ENCODE measurements at regions of chr20 and their contacts with region 1.

Region 1: GRCh38 chr20:13029687-13030510 is 21.1 kb downstream of the SPTLC3 start:
- DNase-seq: peak; percentile 69
- H3K4me3 Mint-ChIP-seq: peak overlapping the region; percentile 28
- H3K27ac Mint-ChIP-seq: peak overlapping the region; percentile 89
- H3K4me1 Mint-ChIP-seq: peaks cover 28% of the 10 kb centered on the region
- H3K27me3 Mint-ChIP-seq: no peaks in the 10 kb centered on the region
- CTCF ChIP-seq: no peak

Region 2: DNA sequence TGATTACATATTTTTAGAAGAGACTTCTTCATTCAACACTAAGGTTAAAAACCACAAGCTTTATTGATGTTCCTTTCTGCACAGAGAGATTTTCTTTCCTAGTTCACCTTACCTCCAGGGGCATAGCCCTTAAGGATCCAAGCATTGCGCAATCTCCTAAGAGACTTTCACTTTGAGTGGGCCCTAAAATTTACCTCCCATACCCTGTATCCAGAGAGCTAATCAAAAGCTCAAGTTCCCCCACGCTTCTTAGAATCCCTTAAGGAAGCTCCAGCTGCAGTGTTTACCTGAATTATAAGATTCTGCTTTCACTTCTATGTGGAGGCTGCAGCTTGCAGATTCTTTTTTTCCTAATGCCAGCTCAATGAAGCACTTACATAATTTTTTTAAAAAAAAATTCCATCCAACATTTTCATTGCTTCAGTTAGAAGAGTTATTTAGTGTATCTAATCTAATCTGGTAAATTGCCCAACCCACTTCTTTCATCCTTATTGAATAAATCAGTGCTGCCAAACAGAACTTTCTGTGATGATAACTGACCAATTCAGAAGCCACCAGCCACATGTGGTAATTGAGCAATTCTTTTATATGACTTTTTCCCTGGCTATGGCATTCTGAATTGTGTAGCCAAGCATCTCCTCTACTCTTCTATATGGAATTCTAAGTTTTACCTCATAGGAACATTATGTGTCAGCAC is 45.7 kb before region 1 on chr20:
- CTCF ChIA-PET with region 1: no interaction called
- intact Hi-C with region 1: loop called (anchors 10 kb)
- DNase-seq: no peak
- H3K4me3 Mint-ChIP-seq: no peak overlapping the region
- H3K27ac Mint-ChIP-seq: no peak overlapping the region
- H3K4me1 Mint-ChIP-seq: peaks cover 27% of the 10 kb centered on the region
- H3K27me3 Mint-ChIP-seq: no peaks in the 10 kb centered on the region
- CTCF ChIP-seq: no peak